ENCODE measurements at regions of chr2 and their contacts with region 1.

Region 1: GRCh38 chr2:228503731-228504130 is 322.2 kb upstream of the SPHKAP start:
- DNase-seq: no peak
- ATAC-seq: no peak
- H3K4me3 ChIP-seq: no peak overlapping the region
- H3K27ac ChIP-seq: no peak overlapping the region
- H3K4me1 ChIP-seq: no peaks in the 10 kb centered on the region
- H3K27me3 ChIP-seq: no peaks in the 10 kb centered on the region
- CTCF ChIP-seq: no peak

Region 2: GRCh38 chr2:228458364-228458763 is 45.4 kb before region 1 on chr2:
- CTCF ChIA-PET with region 1: no interaction called
- POLR2A ChIA-PET with region 1: no interaction called
- intact Hi-C with region 1: loop called (anchors 1 kb)
- DNase-seq: no peak
- ATAC-seq: no peak
- H3K4me3 ChIP-seq: no peak overlapping the region
- H3K27ac ChIP-seq: no peak overlapping the region
- H3K4me1 ChIP-seq: no peaks in the 10 kb centered on the region
- H3K27me3 ChIP-seq: no peaks in the 10 kb centered on the region
- CTCF ChIP-seq: no peak

Region 3: GRCh38 chr2:228917220-228917619 is 413.5 kb after region 1 on chr2:
- CTCF ChIA-PET with region 1: no interaction called
- POLR2A ChIA-PET with region 1: no interaction called
- intact Hi-C with region 1: no loop called
- DNase-seq: peak; percentile 2
- ATAC-seq: no peak
- H3K4me3 ChIP-seq: no peak overlapping the region
- H3K27ac ChIP-seq: no peak overlapping the region
- H3K4me1 ChIP-seq: no peaks in the 10 kb centered on the region
- H3K27me3 ChIP-seq: no peaks in the 10 kb centered on the region
- CTCF ChIP-seq: no peak